B cell (primary cell): ENCODE measurements at regions of chr6 and their contacts with region 1.

Region 1: GRCh38 chr6:41895300-41896233 is at the start of gene USP49:
- DNase-seq: peak; percentile 93
- ATAC-seq: peak; percentile 92
- H3K4me3 ChIP-seq: peak within 1 kb of the TSS; percentile 65 to 96 (median 85)
- H3K4me3 Mint-ChIP-seq: no peak within 1 kb of the TSS
- H3K27ac ChIP-seq: peak within 1 kb of the TSS; percentile 71 to 92
- H3K27ac Mint-ChIP-seq: peak within 1 kb of the TSS; percentile 89
- H3K4me1 ChIP-seq: peaks cover 15 to 17% of the 10 kb centered on the region in 2 donors
- H3K4me1 Mint-ChIP-seq: peaks cover 10% of the 10 kb centered on the region
- H3K27me3 ChIP-seq: no peaks in the 10 kb centered on the region
- H3K27me3 Mint-ChIP-seq: no peaks in the 10 kb centered on the region
- CTCF ChIP-seq: no peak
- total RNA-seq, gene USP49: 7.5 and 9.9 TPM in 2 replicates

Region 2: DNA sequence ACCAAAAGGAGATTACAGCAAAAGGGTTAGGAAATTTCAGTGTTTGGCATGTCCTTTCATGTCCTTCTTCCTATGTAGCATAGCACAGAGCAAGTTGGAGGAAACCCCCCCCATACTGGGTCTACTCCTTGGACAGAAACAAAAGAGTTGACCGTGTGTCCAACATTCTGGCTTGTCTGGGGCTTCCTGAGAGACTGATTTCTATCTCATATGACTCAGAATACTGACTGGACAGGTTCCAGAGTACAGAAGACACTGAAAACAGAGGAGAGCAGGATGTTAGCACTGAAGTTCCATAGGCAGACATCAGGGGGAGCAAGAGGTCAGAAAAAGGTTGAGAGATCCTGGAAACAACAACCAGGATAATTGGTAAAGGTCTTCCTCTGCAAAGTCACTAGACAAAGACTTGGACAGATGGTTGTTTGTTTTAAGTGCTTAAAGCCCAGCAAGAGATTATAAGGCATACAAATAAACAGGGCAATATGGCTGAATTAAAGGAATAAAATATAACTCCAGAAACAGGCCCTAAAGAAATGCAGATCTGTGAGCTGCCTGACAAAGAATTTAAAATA is 48.8 kb before region 1 on chr6:
- CTCF ChIA-PET with region 1: interaction called, 3 read pairs
- POLR2A ChIA-PET with region 1: no interaction called
- intact Hi-C with region 1: loop called (anchors 2 kb)
- DNase-seq: peak; percentile 70
- ATAC-seq: peak; percentile 49
- H3K4me3 ChIP-seq: no peak overlapping the region
- H3K4me3 Mint-ChIP-seq: no peak overlapping the region
- H3K27ac ChIP-seq: no peak overlapping the region
- H3K27ac Mint-ChIP-seq: no peak overlapping the region
- H3K4me1 ChIP-seq: no peaks in the 10 kb centered on the region
- H3K4me1 Mint-ChIP-seq: no peaks in the 10 kb centered on the region
- H3K27me3 ChIP-seq: no peaks in the 10 kb centered on the region
- H3K27me3 Mint-ChIP-seq: no peaks in the 10 kb centered on the region
- CTCF ChIP-seq: peak; percentile 87

Region 3: GRCh38 chr6:41859356-41859755 is 36.2 kb before region 1 on chr6:
- CTCF ChIA-PET with region 1: no interaction called
- POLR2A ChIA-PET with region 1: no interaction called
- intact Hi-C with region 1: no loop called
- DNase-seq: no peak
- ATAC-seq: no peak
- H3K4me3 ChIP-seq: no peak overlapping the region
- H3K4me3 Mint-ChIP-seq: no peak overlapping the region
- H3K27ac ChIP-seq: no peak overlapping the region
- H3K27ac Mint-ChIP-seq: no peak overlapping the region
- H3K4me1 ChIP-seq: no peaks in the 10 kb centered on the region
- H3K4me1 Mint-ChIP-seq: no peaks in the 10 kb centered on the region
- H3K27me3 ChIP-seq: no peaks in the 10 kb centered on the region
- H3K27me3 Mint-ChIP-seq: no peaks in the 10 kb centered on the region
- CTCF ChIP-seq: no peak

Region 4: GRCh38 chr6:41936073-41936837 is 40.7 kb after region 1 on chr6:
- CTCF ChIA-PET with region 1: interaction called, 3 read pairs
- POLR2A ChIA-PET with region 1: interaction called, 3 read pairs
- intact Hi-C with region 1: loop called (anchors 1 kb)
- DNase-seq: peak; percentile 78
- ATAC-seq: peak; percentile 74
- H3K4me3 ChIP-seq: no peak overlapping the region
- H3K4me3 Mint-ChIP-seq: peak overlapping the region; percentile 56
- H3K27ac ChIP-seq: peak overlapping the region; percentile 10 to 59
- H3K27ac Mint-ChIP-seq: peak overlapping the region; percentile 87
- H3K4me1 ChIP-seq: peaks cover 64 to 71% of the 10 kb centered on the region in 2 donors
- H3K4me1 Mint-ChIP-seq: peaks cover 65% of the 10 kb centered on the region
- H3K27me3 ChIP-seq: no peaks in the 10 kb centered on the region
- H3K27me3 Mint-ChIP-seq: no peaks in the 10 kb centered on the region
- CTCF ChIP-seq: peak; percentile 83

Region 5: GRCh38 chr6:42021847-42022754 is 126.5 kb after region 1 on chr6:
- CTCF ChIA-PET with region 1: no interaction called
- POLR2A ChIA-PET with region 1: no interaction called
- intact Hi-C with region 1: loop called (anchors 1 kb)
- DNase-seq: peak; percentile 86
- ATAC-seq: peak; percentile 46
- H3K4me3 ChIP-seq: peak overlapping the region in 3 of 5 experiments; percentile 4 to 46 (median 17)
- H3K4me3 Mint-ChIP-seq: peak overlapping the region; percentile 77
- H3K27ac ChIP-seq: peak overlapping the region; percentile 79 to 93
- H3K27ac Mint-ChIP-seq: peak overlapping the region; percentile 95
- H3K4me1 ChIP-seq: peaks cover 74 to 78% of the 10 kb centered on the region in 2 donors
- H3K4me1 Mint-ChIP-seq: peaks cover 77% of the 10 kb centered on the region
- H3K27me3 ChIP-seq: no peaks in the 10 kb centered on the region
- H3K27me3 Mint-ChIP-seq: no peaks in the 10 kb centered on the region
- CTCF ChIP-seq: peak; percentile 13

Region 6: DNA sequence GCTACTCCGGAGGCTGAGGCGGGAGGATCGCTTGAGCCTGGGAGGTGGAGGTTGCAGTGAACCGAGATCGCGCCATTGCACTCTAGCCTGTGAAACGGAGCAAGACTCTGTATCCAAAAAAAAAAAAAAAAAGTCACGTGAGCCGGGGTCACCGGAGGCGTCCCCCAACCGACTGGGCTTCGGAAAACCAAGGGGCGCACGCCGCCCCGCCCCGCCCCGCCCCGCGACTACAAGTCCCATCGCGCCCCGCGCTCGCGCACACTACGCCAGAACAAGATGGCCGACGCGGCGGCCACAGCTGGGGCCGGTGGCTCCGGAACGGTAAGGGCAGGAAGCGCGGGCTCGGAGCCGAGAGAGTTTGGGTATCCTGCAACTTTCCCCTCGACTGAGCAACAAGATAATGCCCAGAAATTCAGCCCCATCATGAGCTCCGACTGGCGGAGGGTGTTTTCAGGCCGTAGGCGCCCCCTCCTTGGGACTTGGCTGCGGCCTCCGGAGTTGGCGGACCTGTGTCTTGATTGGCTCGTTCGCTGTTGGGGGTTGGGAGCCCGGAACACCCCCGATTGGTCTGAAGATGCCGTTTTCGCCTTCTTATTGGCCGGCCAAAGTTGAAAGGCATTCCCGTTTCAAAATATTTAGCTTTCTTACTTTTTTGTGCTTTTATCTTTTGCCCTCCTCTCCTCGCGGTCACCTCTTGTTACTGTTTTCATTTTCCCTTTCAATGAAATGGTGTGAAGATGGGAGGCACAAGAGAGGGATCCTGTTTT is 154.9 kb after region 1 on chr6 and contains the start of gene TAF8:
- CTCF ChIA-PET with region 1: interaction called, 9 read pairs
- POLR2A ChIA-PET with region 1: interaction called, 8 read pairs
- intact Hi-C with region 1: loop called (anchors 1 kb)
- DNase-seq: peak; percentile 95
- ATAC-seq: peak; percentile 69
- H3K4me3 ChIP-seq: peak within 1 kb of the TSS; percentile 86 to 100 (median 93)
- H3K4me3 Mint-ChIP-seq: peak within 1 kb of the TSS; percentile 99
- H3K27ac ChIP-seq: peak within 1 kb of the TSS; percentile 78 to 81
- H3K27ac Mint-ChIP-seq: peak within 1 kb of the TSS; percentile 99
- H3K4me1 ChIP-seq: peaks cover 43 to 45% of the 10 kb centered on the region in 2 donors
- H3K4me1 Mint-ChIP-seq: peaks cover 61% of the 10 kb centered on the region
- H3K27me3 ChIP-seq: no peaks in the 10 kb centered on the region
- H3K27me3 Mint-ChIP-seq: no peaks in the 10 kb centered on the region
- CTCF ChIP-seq: no peak
- total RNA-seq, gene TAF8: 62.1 and 67.0 TPM in 2 replicates

Region 7: GRCh38 chr6:42294759-42295158 is 399.2 kb after region 1 on chr6:
- CTCF ChIA-PET with region 1: no interaction called
- POLR2A ChIA-PET with region 1: no interaction called
- intact Hi-C with region 1: no loop called
- DNase-seq: no peak
- ATAC-seq: no peak
- H3K4me3 ChIP-seq: no peak overlapping the region
- H3K4me3 Mint-ChIP-seq: no peak overlapping the region
- H3K27ac ChIP-seq: no peak overlapping the region
- H3K27ac Mint-ChIP-seq: no peak overlapping the region
- H3K4me1 ChIP-seq: no peaks in the 10 kb centered on the region
- H3K4me1 Mint-ChIP-seq: no peaks in the 10 kb centered on the region
- H3K27me3 ChIP-seq: no peaks in the 10 kb centered on the region
- H3K27me3 Mint-ChIP-seq: no peaks in the 10 kb centered on the region
- CTCF ChIP-seq: no peak

Region 8: GRCh38 chr6:43181942-43182860 is 1286.6 kb after region 1 on chr6 and contains the start of gene CUL9:
- CTCF ChIA-PET with region 1: no interaction called
- POLR2A ChIA-PET with region 1: no interaction called
- intact Hi-C with region 1: no loop called
- DNase-seq: peak; percentile 90
- ATAC-seq: peak; percentile 99
- H3K4me3 ChIP-seq: peak within 1 kb of the TSS; percentile 60 to 90 (median 74)
- H3K4me3 Mint-ChIP-seq: peak within 1 kb of the TSS; percentile 92
- H3K27ac ChIP-seq: peak within 1 kb of the TSS; percentile 64 to 87
- H3K27ac Mint-ChIP-seq: peak within 1 kb of the TSS; percentile 91
- H3K4me1 ChIP-seq: peaks cover 20% of the 10 kb centered on the region in 2 donors
- H3K4me1 Mint-ChIP-seq: peaks cover 38% of the 10 kb centered on the region
- H3K27me3 ChIP-seq: no peaks in the 10 kb centered on the region
- H3K27me3 Mint-ChIP-seq: no peaks in the 10 kb centered on the region
- CTCF ChIP-seq: no peak
- total RNA-seq, gene CUL9: 110 and 115 TPM in 2 replicates